Activated CD4-positive, alpha-beta memory T cell treated with anti-CD3 and anti-CD28 coated beads for 36 hours (primary cell): ENCODE measurements at regions of chrX and their contacts with region 1.

Region 1: GRCh38 chrX:9942086-9942485 is 25.1 kb upstream of the CLDN34 start:
- DNase-seq: peak; percentile 83
- H3K4me3 Mint-ChIP-seq: no peak overlapping the region
- H3K27ac Mint-ChIP-seq: peak overlapping the region; percentile 57
- H3K4me1 Mint-ChIP-seq: peaks cover 14% of the 10 kb centered on the region
- H3K27me3 Mint-ChIP-seq: peaks cover 19% of the 10 kb centered on the region

Region 2: GRCh38 chrX:9829308-9830267 is 112.5 kb before region 1 on chrX:
- CTCF ChIA-PET with region 1: no interaction called
- POLR2A ChIA-PET with region 1: no interaction called
- intact Hi-C with region 1: loop called (anchors 1 kb)
- DNase-seq: peak; percentile 68
- H3K4me3 Mint-ChIP-seq: no peak overlapping the region
- H3K27ac Mint-ChIP-seq: no peak overlapping the region
- H3K4me1 Mint-ChIP-seq: peaks cover 9% of the 10 kb centered on the region
- H3K27me3 Mint-ChIP-seq: peaks cover 38% of the 10 kb centered on the region

Region 3: GRCh38 chrX:9899640-9900111 is 42.4 kb before region 1 on chrX:
- CTCF ChIA-PET with region 1: no interaction called
- POLR2A ChIA-PET with region 1: no interaction called
- intact Hi-C with region 1: loop called (anchors 1 kb)
- DNase-seq: peak; percentile 46
- H3K4me3 Mint-ChIP-seq: no peak overlapping the region
- H3K27ac Mint-ChIP-seq: no peak overlapping the region
- H3K4me1 Mint-ChIP-seq: peaks cover 23% of the 10 kb centered on the region
- H3K27me3 Mint-ChIP-seq: peaks cover 15% of the 10 kb centered on the region